Right ventricle myocardium superior (tissue), 1 donor: ENCODE measurements at regions of chr2 and their contacts with region 1.

Region 1: GRCh38 chr2:105545730-105546627 is 147.1 kb upstream of the FHL2 start:
- DNase-seq: peak; percentile 62
- ATAC-seq: peak; percentile 81

Region 2: DNA sequence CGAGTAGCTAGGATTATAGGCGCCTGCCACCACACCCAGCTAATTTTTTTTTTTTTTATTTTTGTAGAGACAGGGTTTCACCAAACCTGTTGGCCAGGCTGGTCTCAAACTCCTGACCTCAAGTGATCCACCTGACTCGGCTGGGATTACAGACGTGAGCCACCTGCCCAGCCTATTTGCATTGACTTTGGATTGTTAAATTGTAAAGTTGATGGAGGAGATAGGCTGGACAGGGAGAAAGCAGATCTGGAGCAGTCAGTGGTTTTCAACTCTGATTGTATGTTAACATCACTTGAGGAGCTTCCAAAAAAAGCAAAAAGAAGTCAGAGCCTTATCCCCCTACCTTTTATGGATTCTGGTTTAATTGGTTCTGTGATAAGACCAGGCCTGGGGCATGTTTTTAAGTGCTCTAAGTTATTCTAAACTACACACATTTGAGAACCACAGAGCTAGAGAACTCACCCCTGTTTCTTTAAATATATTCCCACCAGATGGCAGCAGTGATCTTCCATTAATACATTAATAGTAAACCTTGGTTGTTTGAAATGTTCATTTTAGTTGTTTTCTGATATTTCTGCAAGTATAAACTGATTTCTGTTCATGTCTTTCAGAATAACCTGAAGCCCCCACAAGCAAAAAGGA is 201.2 kb before region 1 on chr2:
- intact Hi-C with region 1: loop called (anchors 10 kb)
- DNase-seq: no peak
- ATAC-seq: peak; percentile 64